ENCODE measurements at regions of chr14 and their contacts with region 1.

Region 1: GRCh38 chr14:56579345-56580220 is at the start of gene TMEM260:
- DNase-seq: peak; percentile 81
- H3K4me3 ChIP-seq: peak within 1 kb of the TSS; percentile 68 to 97 (median 92)
- H3K27ac ChIP-seq: peak within 1 kb of the TSS; percentile 91
- H3K4me1 ChIP-seq: peaks cover 16% of the 10 kb centered on the region
- H3K27me3 ChIP-seq: no peaks in the 10 kb centered on the region
- CTCF ChIP-seq: peak; percentile 89 to 91
- total RNA-seq, gene TMEM260: 12.5 to 16.0 TPM

Region 2: GRCh38 chr14:56608682-56609081 is 29.1 kb after region 1 on chr14:
- CTCF ChIA-PET with region 1: interaction called, 8 read pairs
- dilution Hi-C with region 1: no loop called
- in situ Hi-C with region 1: no loop called
- intact Hi-C with region 1: loop called (anchors 1 kb)
- DNase-seq: peak; percentile 10
- H3K4me3 ChIP-seq: no peak overlapping the region
- H3K27ac ChIP-seq: no peak overlapping the region
- H3K4me1 ChIP-seq: no peaks in the 10 kb centered on the region
- H3K27me3 ChIP-seq: no peaks in the 10 kb centered on the region
- CTCF ChIP-seq: no peak

Region 3: GRCh38 chr14:56617084-56617483 is 37.5 kb after region 1 on chr14:
- CTCF ChIA-PET with region 1: interaction called, 17 read pairs
- dilution Hi-C with region 1: no loop called
- in situ Hi-C with region 1: no loop called
- intact Hi-C with region 1: no loop called
- DNase-seq: no peak
- H3K4me3 ChIP-seq: no peak overlapping the region
- H3K27ac ChIP-seq: no peak overlapping the region
- H3K4me1 ChIP-seq: no peaks in the 10 kb centered on the region
- H3K27me3 ChIP-seq: no peaks in the 10 kb centered on the region
- CTCF ChIP-seq: no peak

Region 4: DNA sequence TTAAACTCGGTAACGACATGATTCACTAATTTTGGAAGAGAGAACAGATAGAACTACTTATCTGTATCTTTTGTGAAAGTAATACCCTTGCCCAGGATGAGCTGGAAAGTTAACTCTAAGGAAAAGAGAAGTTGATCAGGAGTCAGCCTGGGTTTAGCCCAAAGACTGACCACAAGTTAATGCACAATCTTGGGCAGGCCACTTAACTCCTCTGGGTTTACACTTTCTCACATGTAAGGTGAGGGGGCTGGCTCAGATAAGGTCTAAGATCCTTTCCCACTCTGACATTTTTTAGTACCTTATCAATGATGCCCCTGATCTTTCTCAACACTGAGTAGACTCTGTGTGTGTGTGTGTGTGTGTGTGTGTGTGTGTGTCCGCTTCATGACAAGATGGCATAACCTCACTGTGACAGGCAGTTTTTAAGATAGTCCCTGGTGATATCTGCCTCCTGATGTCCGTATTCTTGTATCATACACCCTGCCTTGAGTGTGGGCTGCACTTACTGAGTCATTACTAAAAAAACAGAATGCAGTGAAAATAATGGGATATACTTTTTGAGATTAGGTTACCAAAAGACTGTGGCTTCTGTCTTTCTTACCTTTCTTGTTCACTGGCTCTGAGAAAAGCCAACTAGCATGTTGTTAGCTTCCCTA is 970.3 kb after region 1 on chr14:
- CTCF ChIA-PET with region 1: no interaction called
- dilution Hi-C with region 1: no loop called
- in situ Hi-C with region 1: no loop called
- intact Hi-C with region 1: no loop called
- DNase-seq: no peak
- H3K4me3 ChIP-seq: no peak overlapping the region
- H3K27ac ChIP-seq: no peak overlapping the region
- H3K4me1 ChIP-seq: no peaks in the 10 kb centered on the region
- H3K27me3 ChIP-seq: no peaks in the 10 kb centered on the region
- CTCF ChIP-seq: no peak

Measured in mammary epithelial cell (primary cell).